Sigmoid colon (tissue), 7 donors: ENCODE measurements at regions of chr7 and their contacts with region 1.

Region 1: DNA sequence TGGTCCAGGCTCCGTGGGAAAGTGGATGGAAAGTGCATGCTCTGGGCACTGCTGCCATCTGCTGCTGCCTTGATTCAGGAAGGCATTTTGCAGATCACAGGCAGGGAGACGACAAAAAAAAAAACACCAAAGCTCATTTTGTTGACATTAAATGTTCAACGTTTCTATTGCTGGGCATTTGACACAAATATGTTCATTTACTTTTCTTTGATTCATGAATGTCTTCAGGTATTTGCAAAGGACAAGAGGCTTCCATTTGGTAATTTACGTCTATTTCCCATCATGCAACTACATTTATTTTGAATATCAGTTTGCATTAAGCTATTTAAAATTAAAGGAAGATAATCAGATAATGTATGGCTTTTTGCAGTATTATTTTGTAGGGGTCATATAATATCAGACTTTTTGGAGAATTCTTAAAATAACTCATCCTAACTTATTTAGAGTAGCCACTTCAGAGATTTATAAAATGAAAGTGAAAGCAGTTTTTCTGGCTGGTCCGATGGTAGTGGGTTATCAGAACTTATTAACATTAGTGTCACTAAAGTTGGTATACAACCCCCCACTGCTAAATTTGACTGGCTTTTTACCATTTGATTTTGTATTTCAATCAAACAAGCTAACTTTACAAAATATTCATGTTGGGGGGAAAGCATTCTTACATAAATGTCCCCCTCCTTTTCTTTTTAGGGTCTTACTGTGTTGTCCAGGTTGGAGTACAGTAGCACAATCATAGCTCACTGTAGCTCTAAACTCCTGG is 65.3 kb downstream of the PDIA4 start:
- DNase-seq: peak; percentile 82
- H3K4me3 ChIP-seq: peak overlapping the region; percentile 39 to 60 (median 53)
- H3K27ac ChIP-seq: peak overlapping the region; percentile 60 to 75 (median 71)
- H3K4me1 ChIP-seq: peaks cover 0 to 18% (median 14%) of the 10 kb centered on the region in 4 donors
- H3K27me3 ChIP-seq: no peaks in the 10 kb centered on the region
- CTCF ChIP-seq: peak in 3 of 4 experiments; percentile 34 to 71 (median 48)
- EP300 ChIP-seq: no peak
- POLR2A ChIP-seq: no peak

Region 2: DNA sequence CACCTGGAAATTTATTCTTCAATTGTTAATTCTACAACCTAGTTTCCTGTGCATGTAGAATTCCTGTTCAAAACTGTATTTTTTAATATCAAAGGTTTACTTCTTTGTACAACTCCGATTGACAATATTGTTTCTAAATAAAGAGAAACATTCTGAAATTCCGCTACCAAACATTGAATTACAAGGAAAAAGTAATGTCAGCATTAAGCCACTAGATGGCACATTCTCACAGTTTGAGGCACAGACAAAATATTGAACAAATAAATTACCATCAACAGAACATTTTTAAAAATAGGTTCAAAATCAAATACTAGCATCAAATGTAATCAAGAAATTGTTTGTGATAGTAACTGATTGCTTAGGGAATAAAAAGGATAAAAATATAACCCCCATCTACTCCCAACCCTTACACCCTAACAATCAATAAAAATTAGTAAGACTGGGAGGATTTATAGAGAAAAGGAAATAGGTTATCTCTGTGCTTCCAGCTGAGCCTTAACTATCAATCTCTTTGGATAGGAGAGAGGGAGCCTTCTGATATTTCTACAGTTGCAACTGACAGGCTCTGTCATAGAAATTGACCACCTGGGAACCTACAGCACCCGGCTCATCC is 459.0 kb before region 1 on chr7:
- intact Hi-C with region 1: loop called (anchors 2 kb)
- DNase-seq: no peak
- H3K4me3 ChIP-seq: no peak overlapping the region
- H3K27ac ChIP-seq: no peak overlapping the region
- H3K4me1 ChIP-seq: no peaks in the 10 kb centered on the region
- H3K27me3 ChIP-seq: peaks cover 0 to 29% (median 14%) of the 10 kb centered on the region in 3 donors
- CTCF ChIP-seq: peak; percentile 37 to 66 (median 58)
- EP300 ChIP-seq: no peak
- POLR2A ChIP-seq: no peak

Region 3: GRCh38 chr7:148575640-148576411 is 387.2 kb before region 1 on chr7:
- intact Hi-C with region 1: loop called (anchors 1 kb)
- DNase-seq: peak; percentile 75
- H3K4me3 ChIP-seq: no peak overlapping the region
- H3K27ac ChIP-seq: no peak overlapping the region
- H3K4me1 ChIP-seq: peaks cover 0 to 3% (median 0%) of the 10 kb centered on the region in 4 donors
- H3K27me3 ChIP-seq: no peaks in the 10 kb centered on the region
- CTCF ChIP-seq: peak; percentile 40 to 79 (median 68)
- EP300 ChIP-seq: no peak
- POLR2A ChIP-seq: no peak

Region 4: DNA sequence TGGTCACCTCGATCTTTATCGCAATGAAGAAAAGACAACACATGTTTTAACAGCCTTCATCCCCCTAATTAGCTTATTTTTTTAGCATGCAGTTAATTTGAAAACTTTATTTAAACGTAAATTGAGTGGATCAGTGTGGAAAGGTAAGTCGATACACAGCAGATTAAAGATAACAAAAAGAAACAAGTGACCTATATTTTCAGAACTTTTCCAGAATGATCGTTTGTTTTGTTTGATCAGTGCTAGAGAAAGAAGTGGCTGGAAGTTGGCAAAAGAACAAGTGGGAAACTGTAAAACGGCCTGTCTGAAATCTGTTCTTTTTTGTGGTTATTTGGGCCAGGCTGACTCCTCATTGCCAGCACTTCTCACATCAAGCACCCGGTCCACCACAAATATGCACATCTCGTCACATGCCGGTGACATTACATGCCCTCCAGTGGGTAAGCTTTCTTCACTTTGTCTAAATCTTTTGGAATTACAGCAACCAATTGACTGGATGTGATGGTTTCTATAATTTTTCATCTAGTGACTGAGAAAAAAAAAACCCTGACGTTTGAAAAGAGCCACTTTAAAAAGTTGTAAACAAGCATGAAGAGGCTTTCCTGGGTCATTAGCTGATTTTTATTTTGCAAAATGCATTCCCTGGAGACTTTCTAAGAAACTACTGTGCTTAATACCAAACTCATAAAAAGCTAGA is 339.3 kb before region 1 on chr7:
- intact Hi-C with region 1: no loop called
- DNase-seq: no peak
- H3K4me3 ChIP-seq: no peak overlapping the region
- H3K27ac ChIP-seq: no peak overlapping the region
- H3K4me1 ChIP-seq: peaks cover 0 to 8% (median 0%) of the 10 kb centered on the region in 4 donors
- H3K27me3 ChIP-seq: no peaks in the 10 kb centered on the region
- CTCF ChIP-seq: no peak
- EP300 ChIP-seq: no peak
- POLR2A ChIP-seq: no peak

Region 5: DNA sequence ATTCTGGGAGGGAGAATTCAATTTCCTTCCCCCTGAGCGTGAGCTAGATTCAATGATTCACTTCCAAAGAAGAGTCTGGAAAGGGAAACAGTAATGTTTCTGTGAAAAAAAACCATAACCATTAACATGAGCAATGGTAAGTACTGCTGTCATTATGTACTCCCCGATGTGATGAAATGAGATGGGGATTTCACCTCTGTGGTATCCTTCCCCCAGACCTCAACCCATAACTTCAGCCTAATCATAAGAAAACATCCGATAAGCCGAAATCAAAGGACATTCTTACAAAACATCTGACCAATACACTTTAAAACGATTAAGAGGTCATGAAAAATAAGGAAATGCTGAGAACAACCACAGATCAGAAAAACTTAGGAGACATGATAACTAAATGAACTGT is 106.1 kb before region 1 on chr7:
- intact Hi-C with region 1: loop called (anchors 1 kb)
- DNase-seq: no peak
- H3K4me3 ChIP-seq: no peak overlapping the region
- H3K27ac ChIP-seq: no peak overlapping the region
- H3K4me1 ChIP-seq: no peaks in the 10 kb centered on the region
- H3K27me3 ChIP-seq: no peaks in the 10 kb centered on the region
- CTCF ChIP-seq: no peak
- EP300 ChIP-seq: no peak
- POLR2A ChIP-seq: no peak

Region 6: GRCh38 chr7:148940702-148941597 is 22.1 kb before region 1 on chr7:
- intact Hi-C with region 1: loop called (anchors 1 kb)
- DNase-seq: peak; percentile 90
- H3K4me3 ChIP-seq: peak overlapping the region; percentile 57 to 84 (median 73)
- H3K27ac ChIP-seq: peak overlapping the region; percentile 82 to 91 (median 86)
- H3K4me1 ChIP-seq: peaks cover 0 to 20% (median 7%) of the 10 kb centered on the region in 4 donors
- H3K27me3 ChIP-seq: no peaks in the 10 kb centered on the region
- CTCF ChIP-seq: no peak
- EP300 ChIP-seq: peak in 1 of 4 donors; percentile 4
- POLR2A ChIP-seq: no peak

Region 7: GRCh38 chr7:149195180-149196150 is 232.5 kb after region 1 on chr7 and contains the start of gene ZNF282:
- intact Hi-C with region 1: no loop called
- DNase-seq: peak; percentile 94
- H3K4me3 ChIP-seq: peak within 1 kb of the TSS; percentile 71 to 89 (median 81)
- H3K27ac ChIP-seq: peak within 1 kb of the TSS; percentile 92 to 95 (median 94)
- H3K4me1 ChIP-seq: peaks cover 0 to 31% (median 25%) of the 10 kb centered on the region in 4 donors
- H3K27me3 ChIP-seq: no peaks in the 10 kb centered on the region
- CTCF ChIP-seq: peak in 3 of 4 experiments; percentile 32 to 62 (median 41)
- EP300 ChIP-seq: no peak
- POLR2A ChIP-seq: peak in 1 of 2 donors; percentile 18
- total RNA-seq, gene ZNF282: 11.8 to 24.9 (median 13.9) TPM